Posterior vena cava (tissue), 2 donors: ENCODE measurements at regions of chr17 and their contacts with region 1.

Region 1: GRCh38 chr17:68909066-68909465 is 46.1 kb downstream of the ABCA8 start:
- DNase-seq: no peak

Region 2: DNA sequence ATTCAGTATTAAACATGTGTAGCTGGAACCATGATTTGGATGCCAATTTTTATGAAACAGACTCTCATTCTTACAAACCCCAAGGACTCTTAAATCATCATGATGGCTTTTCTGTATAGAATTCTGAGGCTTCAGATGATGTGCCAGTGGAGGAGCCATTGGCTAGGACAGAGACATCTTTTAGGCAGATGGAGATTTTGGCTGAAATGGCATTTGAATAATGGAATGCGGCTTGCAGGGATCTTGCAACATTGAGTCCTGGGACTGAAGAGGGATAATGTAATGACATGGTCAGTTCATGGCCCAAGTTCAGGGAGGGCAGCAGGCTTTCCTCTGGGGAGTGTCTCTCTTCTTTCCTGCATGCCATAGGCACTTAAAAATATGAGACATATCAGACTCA is 126.3 kb before region 1 on chr17:
- intact Hi-C with region 1: loop called in 1 of 2 experiments (anchors 10 kb)
- DNase-seq: no peak

Region 3: DNA sequence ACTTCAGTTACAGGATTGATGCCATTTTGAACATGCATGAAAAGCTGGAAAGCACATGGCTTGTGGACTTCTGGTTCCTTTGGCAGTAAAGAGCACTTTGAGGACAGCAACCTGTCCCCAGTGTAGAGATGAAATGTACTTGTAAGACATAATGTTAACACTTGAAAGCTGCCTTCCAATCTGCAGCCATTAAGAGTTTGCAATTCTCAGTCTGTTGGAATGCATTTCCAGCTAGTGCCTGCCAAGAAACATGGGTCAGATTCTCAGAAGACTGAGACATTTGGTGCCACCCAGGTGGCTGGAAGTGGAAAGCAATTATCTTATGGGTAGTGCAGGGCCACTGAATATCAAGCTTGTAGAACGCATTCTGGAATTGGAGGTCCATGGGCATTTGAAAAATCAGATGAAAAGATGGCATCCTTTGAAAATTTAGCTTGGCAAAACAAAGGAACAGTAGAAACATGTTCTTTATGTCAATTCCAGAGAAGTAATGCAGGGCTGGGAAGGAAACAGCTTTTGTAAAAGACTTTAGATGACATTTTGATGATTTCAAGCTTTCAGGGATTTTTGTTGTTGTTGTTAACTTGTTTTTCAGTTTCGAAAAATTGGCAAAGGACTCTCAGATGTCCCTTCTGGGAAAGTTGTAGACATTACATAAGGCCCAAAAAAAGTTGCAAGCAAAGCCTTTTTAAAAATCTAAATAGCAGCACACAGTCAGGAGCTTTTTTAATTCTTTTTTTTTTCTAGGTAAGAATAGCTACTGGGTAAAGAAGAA is 100.9 kb before region 1 on chr17:
- intact Hi-C with region 1: loop called in 1 of 2 experiments (anchors 10 kb)
- DNase-seq: no peak

Region 4: DNA sequence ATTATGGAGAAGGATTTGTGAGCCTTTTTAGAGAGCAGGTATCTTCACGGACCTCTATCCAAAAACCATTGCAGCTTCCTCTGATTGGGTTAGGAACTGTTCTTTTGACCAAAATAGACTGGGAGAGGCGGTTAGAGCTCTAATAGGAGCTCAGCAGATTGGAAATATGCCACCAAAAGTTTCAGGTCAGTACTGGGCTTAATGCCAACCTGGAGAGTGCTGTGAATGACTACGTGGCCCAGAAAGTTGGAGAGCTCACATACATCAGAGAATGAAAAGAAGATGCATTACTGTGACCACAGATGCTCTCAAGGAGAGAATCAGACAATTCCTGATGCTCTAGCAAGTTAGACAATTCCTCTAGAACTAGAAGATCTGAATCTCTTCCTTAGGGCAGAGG is 40.4 kb before region 1 on chr17:
- intact Hi-C with region 1: no loop called
- DNase-seq: no peak